ENCODE measurements at regions of chr18 and their contacts with region 1.

Region 1: GRCh38 chr18:34122724-34123334 is 101.9 kb downstream of the NOL4 start:
- DNase-seq: peak; percentile 30
- H3K4me3 Mint-ChIP-seq: no peak overlapping the region
- H3K27ac Mint-ChIP-seq: no peak overlapping the region
- H3K4me1 Mint-ChIP-seq: no peaks in the 10 kb centered on the region
- H3K27me3 Mint-ChIP-seq: no peaks in the 10 kb centered on the region

Region 2: DNA sequence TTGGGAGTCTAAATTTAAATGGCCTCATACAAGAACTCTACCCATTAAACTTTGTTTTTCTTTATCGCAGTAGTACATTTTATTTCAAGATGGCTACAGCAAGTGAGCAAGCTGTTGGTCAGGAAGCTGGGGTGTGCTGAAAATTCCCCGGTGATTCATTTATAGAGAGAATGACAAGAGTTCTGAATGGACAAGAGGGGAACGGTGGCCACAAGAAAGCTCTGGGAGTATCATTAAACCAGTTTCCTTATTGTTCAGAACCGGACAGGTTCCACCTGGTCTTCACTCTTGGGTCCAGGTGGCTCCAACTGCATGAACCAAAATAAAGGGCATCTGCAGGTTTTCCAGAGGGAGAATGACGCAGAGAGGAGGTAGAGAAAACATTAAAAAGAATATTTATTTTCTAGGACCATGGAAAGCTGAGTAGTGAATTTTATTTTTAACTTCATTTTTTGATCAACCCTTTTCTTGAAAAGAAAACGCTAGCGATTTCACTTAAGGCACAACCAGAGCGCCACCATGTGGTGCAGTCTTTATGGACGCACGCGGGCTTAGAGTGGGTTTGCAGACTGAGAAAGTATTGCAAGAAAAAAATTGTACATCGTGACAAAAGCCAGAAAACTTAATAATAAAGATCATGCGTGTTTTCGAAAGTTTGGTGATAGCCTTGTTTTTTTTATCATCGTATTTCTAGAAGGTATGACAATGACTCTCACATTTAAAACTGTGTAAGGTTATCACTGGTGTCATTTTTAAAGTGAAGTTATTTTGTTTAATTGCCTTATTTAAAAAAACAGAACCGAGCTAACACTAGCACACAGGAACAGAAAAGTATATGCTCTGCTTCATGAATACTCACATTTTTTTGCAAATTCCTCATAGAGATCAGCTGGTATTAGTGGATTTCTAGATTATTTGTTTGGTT is 199.8 kb after region 1 on chr18:
- CTCF ChIA-PET with region 1: interaction called, 7 read pairs
- intact Hi-C with region 1: loop called (anchors 1 kb)
- DNase-seq: peak; percentile 29
- H3K4me3 Mint-ChIP-seq: no peak overlapping the region
- H3K27ac Mint-ChIP-seq: no peak overlapping the region
- H3K4me1 Mint-ChIP-seq: no peaks in the 10 kb centered on the region
- H3K27me3 Mint-ChIP-seq: no peaks in the 10 kb centered on the region

Region 3: GRCh38 chr18:34661464-34662111 is 538.8 kb after region 1 on chr18:
- CTCF ChIA-PET with region 1: interaction called, 3 read pairs
- intact Hi-C with region 1: loop called (anchors 10 kb)
- DNase-seq: no peak
- H3K4me3 Mint-ChIP-seq: no peak overlapping the region
- H3K27ac Mint-ChIP-seq: no peak overlapping the region
- H3K4me1 Mint-ChIP-seq: no peaks in the 10 kb centered on the region
- H3K27me3 Mint-ChIP-seq: peaks cover 16% of the 10 kb centered on the region

Region 4: GRCh38 chr18:34901299-34901698 is 778.5 kb after region 1 on chr18:
- CTCF ChIA-PET with region 1: no interaction called
- intact Hi-C with region 1: loop called (anchors 10 kb)
- DNase-seq: no peak
- H3K4me3 Mint-ChIP-seq: no peak overlapping the region
- H3K27ac Mint-ChIP-seq: no peak overlapping the region
- H3K4me1 Mint-ChIP-seq: peaks cover 9% of the 10 kb centered on the region
- H3K27me3 Mint-ChIP-seq: no peaks in the 10 kb centered on the region

Region 5: DNA sequence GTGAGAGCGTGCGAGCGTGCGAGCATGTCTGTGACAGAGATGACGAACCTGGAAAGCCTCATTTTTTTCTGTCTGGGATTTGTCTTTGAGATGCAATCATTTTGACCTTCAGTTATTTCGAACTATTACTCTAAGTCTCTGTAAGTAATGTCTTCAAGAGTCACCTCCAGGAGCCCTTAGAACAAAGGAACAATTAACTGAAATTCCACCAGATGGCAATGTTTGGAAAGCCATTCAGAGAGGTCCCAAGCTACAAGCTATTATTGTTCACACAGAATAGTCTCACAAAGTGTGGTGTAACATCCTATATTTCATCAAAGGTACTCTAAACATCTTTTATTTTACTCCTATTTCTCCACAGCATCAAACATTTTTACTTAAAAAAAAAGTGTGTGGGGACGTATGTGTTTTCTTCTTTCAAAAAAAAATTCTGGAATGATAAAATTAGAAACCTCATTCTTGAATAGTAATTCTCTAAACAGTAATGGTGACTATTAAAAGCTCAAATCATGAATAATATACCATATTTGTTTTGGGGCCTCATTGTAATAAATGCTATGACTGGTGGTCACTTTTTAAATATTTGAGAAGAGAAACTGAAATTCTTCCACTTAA is 883.2 kb after region 1 on chr18:
- CTCF ChIA-PET with region 1: no interaction called
- intact Hi-C with region 1: no loop called
- DNase-seq: no peak
- H3K4me3 Mint-ChIP-seq: no peak overlapping the region
- H3K27ac Mint-ChIP-seq: no peak overlapping the region
- H3K4me1 Mint-ChIP-seq: no peaks in the 10 kb centered on the region
- H3K27me3 Mint-ChIP-seq: no peaks in the 10 kb centered on the region